Activated CD4-positive, alpha-beta memory T cell treated with anti-CD3 and anti-CD28 coated beads for 36 hours (primary cell): ENCODE measurements at regions of chr12 and their contacts with region 1.

Region 1: GRCh38 chr12:47812797-47813510 is 6.7 kb downstream of the HDAC7 start:
- DNase-seq: peak; percentile 98
- H3K4me3 Mint-ChIP-seq: peak overlapping the region; percentile 92
- H3K27ac Mint-ChIP-seq: peak overlapping the region; percentile 99
- H3K4me1 Mint-ChIP-seq: peaks cover 82% of the 10 kb centered on the region
- H3K27me3 Mint-ChIP-seq: no peaks in the 10 kb centered on the region

Region 2: GRCh38 chr12:47079468-47079980 is 733.4 kb before region 1 on chr12 and contains the starts of genes AMIGO2 and PCED1B:
- CTCF ChIA-PET with region 1: no interaction called
- POLR2A ChIA-PET with region 1: no interaction called
- intact Hi-C with region 1: loop called (anchors 10 kb)
- DNase-seq: peak; percentile 83
- H3K4me3 Mint-ChIP-seq: peak within 1 kb of the TSS; percentile 99
- H3K27ac Mint-ChIP-seq: peak within 1 kb of the TSS; percentile 92
- H3K4me1 Mint-ChIP-seq: peaks cover 72% of the 10 kb centered on the region
- H3K27me3 Mint-ChIP-seq: no peaks in the 10 kb centered on the region
- total RNA-seq, gene AMIGO2: 12.4 to 13.6 TPM
- total RNA-seq, gene PCED1B: 133 to 136 TPM

Region 3: GRCh38 chr12:47111392-47111778 is 701.6 kb before region 1 on chr12:
- CTCF ChIA-PET with region 1: no interaction called
- POLR2A ChIA-PET with region 1: no interaction called
- intact Hi-C with region 1: no loop called
- DNase-seq: peak; percentile 56
- H3K4me3 Mint-ChIP-seq: no peak overlapping the region
- H3K27ac Mint-ChIP-seq: no peak overlapping the region
- H3K4me1 Mint-ChIP-seq: peaks cover 38% of the 10 kb centered on the region
- H3K27me3 Mint-ChIP-seq: no peaks in the 10 kb centered on the region

Region 4: DNA sequence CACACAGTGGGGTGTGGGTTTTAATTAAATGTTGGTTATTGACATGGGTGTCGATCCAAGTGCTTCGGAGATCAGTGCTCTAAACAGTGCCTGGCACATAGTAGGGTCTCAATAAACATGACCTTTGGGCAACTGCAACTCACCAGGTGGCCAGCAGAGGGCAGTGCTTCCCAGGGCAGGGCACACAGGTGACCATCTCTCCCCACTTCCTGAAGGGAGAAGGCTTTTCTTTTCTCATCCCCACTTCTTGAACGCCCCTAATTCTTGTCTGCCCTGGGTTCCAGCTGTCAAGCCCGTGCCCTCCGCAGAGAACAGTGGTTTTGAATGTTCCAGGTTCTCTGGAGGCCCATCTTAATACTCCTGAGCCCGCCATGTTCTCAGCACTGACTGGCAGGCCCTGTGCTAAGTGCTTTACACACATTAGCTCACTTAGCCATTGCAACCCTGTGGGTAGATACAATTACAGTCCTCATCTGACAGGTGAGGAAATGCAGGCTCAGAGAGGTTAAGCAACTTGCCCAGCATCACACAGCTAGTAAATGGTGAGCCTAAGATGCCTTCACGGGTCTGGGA is 70.6 kb before region 1 on chr12:
- CTCF ChIA-PET with region 1: interaction called, 46 read pairs
- POLR2A ChIA-PET with region 1: interaction called, 3 read pairs
- intact Hi-C with region 1: no loop called
- DNase-seq: peak; percentile 85
- H3K4me3 Mint-ChIP-seq: no peak overlapping the region
- H3K27ac Mint-ChIP-seq: no peak overlapping the region
- H3K4me1 Mint-ChIP-seq: peaks cover 29% of the 10 kb centered on the region
- H3K27me3 Mint-ChIP-seq: no peaks in the 10 kb centered on the region

Region 5: DNA sequence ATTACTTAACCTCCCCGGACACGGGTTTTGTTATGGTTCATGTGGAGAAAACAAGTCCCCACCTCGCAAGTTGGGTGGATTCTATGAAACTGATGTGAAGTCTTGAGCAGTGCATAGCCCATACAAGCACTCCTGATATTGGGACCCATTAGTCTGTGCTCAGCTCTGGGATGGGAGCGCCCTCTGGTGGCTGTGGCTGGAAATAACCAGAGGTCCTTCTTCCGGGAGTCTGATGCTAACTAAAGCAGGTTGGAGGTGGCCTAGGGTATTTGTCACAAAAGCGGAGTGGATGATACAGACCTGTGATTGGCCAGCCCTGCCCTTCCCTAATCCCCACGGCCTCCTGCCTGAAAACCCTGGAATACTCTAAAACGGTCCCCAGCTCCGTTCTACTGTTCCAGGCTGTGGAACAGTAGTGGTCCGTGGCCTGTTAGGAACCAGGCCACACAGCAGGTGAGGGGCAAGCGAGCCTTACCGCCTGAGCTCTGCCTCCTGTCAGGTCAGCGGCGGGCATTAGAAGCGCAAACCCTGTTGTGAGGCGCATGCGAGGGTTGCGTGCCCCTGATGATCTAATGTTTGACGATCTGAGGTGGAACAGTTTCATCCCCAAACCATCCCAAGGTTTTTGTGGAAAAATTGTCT is 33.5 kb before region 1 on chr12:
- CTCF ChIA-PET with region 1: interaction called, 12 read pairs
- POLR2A ChIA-PET with region 1: interaction called, 7 read pairs
- intact Hi-C with region 1: no loop called
- DNase-seq: peak; percentile 95
- H3K4me3 Mint-ChIP-seq: no peak overlapping the region
- H3K27ac Mint-ChIP-seq: no peak overlapping the region
- H3K4me1 Mint-ChIP-seq: peaks cover 17% of the 10 kb centered on the region
- H3K27me3 Mint-ChIP-seq: no peaks in the 10 kb centered on the region

Region 6: DNA sequence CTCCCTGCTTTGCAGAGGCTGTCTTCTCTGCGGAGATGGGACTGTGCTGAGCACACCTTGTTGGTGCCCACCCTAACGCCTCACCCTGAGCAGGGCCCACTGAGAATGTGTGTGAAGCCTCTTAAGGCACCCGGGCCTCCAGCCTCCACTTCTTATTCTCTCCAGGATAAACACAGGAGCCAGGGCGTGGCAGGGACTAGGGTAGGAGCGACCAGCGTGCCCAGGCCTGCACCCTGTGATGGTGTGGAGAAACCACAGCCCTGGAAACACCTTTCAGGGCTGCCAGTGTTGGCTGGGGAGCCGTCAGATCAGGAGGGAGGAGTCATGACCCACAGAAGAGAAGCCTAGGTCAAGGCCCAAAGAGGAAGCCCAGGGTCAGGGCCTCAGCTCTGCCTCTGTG is 50.5 kb after region 1 on chr12:
- CTCF ChIA-PET with region 1: interaction called, 4 read pairs
- POLR2A ChIA-PET with region 1: interaction called, 10 read pairs
- intact Hi-C with region 1: loop called (anchors 2 kb)
- DNase-seq: no peak
- H3K4me3 Mint-ChIP-seq: no peak overlapping the region
- H3K27ac Mint-ChIP-seq: peak overlapping the region; percentile 54
- H3K4me1 Mint-ChIP-seq: peaks cover 86% of the 10 kb centered on the region
- H3K27me3 Mint-ChIP-seq: no peaks in the 10 kb centered on the region

Region 7: DNA sequence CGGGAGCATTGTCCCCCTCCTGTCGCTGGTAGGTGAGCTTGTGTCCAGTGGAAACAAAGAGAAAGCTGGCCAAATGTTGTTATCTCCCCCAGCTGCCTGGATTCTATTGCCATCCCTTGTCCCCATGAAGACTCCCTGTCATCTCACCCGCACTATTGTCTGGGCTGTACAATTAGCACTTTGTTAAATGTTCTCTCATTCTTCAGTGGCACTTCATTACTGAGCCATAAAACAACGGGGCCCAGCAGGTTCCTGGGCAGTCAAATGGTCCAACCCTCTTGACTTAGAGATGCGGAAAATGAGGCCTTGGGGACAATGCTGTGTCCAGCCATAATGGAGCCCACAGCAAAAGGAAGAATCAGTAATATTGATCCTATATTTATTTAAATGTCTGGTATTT is 204.5 kb after region 1 on chr12:
- CTCF ChIA-PET with region 1: no interaction called
- POLR2A ChIA-PET with region 1: no interaction called
- intact Hi-C with region 1: no loop called
- DNase-seq: no peak
- H3K4me3 Mint-ChIP-seq: no peak overlapping the region
- H3K27ac Mint-ChIP-seq: no peak overlapping the region
- H3K4me1 Mint-ChIP-seq: no peaks in the 10 kb centered on the region
- H3K27me3 Mint-ChIP-seq: peaks cover 12% of the 10 kb centered on the region

Region 8: DNA sequence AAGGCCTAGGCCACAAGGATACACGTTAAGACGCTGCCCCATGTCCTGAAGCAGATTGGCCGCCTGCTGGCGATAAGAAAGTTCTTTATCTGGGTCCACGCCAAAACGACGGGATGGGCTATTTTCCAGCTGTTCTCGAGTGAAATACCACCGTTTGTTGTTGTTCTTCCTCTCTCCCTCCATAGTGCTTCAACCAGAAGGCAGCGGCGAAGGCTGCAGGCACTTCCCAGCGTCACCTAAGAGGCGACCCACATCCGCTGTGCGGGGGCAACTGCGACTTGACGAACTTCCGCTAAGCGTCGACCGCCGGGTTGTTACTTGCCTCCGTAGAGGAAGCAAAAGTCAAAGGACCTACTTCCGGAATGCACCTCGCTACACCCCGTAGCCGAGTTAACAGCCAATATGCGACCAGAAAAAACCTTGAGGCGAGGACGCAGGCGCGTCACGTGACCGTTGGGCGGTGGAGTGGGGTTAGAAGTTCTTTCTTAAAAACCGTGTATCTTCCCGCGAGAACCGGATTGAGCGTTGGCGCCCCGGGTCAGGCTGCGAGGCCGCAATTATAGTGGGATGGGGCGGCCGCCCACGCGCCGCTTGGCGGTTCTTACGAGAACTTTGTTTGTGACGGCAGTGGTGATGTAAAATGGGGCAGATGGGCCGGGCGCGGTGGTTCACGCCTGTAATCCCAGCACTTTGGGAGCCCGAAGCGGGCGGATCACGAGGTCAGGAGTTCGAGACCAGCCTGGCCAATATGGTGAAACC is 903.7 kb after region 1 on chr12 and contains the start of gene CCNT1:
- CTCF ChIA-PET with region 1: no interaction called
- POLR2A ChIA-PET with region 1: no interaction called
- intact Hi-C with region 1: loop called (anchors 2 kb)
- DNase-seq: peak; percentile 100
- H3K4me3 Mint-ChIP-seq: peak within 1 kb of the TSS; percentile 98
- H3K27ac Mint-ChIP-seq: peak within 1 kb of the TSS; percentile 99
- H3K4me1 Mint-ChIP-seq: peaks cover 39% of the 10 kb centered on the region
- H3K27me3 Mint-ChIP-seq: no peaks in the 10 kb centered on the region
- total RNA-seq, gene CCNT1: 66.2 to 73.3 TPM